Activated T-helper 1 cell treated with anti-CD3 and anti-CD28 coated beads, Interleukin-12 subunit alpha, Interleukin-12 subunit beta, Interleukin-2, Interleukin-4 antibody, amounts not matched to agents 30 ng/mL and 10 ng/mL and 1 ng/mL, durations not matched to agents 14 hours and 24 hours and 36 hours (primary cell): ENCODE measurements at regions of chr2 and their contacts with region 1.

Region 1: GRCh38 chr2:17646081-17646554 is 105.6 kb downstream of the VSNL1 start:
- DNase-seq: peak; percentile 29
- H3K4me3 Mint-ChIP-seq: no peak overlapping the region
- H3K27ac Mint-ChIP-seq: no peak overlapping the region
- H3K4me1 Mint-ChIP-seq: no peaks in the 10 kb centered on the region
- H3K27me3 Mint-ChIP-seq: no peaks in the 10 kb centered on the region

Region 2: DNA sequence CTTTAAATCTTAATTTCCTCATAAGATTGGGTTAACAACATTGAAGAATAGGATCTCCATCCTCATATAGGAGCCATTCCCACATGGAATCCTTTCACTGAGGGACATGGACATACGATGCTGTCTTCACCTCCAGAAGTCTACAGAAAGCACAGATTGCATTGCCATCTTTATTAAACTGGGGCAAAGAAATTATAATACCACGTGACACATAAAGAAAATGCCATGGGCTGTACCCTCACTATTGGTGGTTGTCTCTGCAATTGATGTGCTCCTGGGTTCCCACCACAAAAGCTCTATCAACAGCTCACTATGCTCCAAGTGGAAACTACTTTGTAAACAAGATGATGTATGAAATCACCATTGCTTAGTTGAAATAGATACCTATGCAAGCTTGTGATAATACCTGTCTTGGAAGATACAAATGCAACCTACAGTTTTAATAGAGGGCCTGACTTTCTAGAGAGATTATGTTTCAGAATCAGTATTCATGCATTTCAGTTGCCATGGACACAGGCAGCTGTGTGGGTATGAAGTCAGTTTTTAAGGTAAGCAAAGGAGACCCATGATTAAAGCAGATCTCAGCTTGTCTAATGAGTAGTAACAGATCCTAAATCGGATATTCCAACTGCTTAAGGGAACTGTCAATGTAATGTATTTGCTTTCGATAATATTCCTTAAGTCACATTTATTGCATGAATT is 464.9 kb before region 1 on chr2:
- intact Hi-C with region 1: no loop called
- DNase-seq: no peak
- H3K4me3 Mint-ChIP-seq: no peak overlapping the region
- H3K27ac Mint-ChIP-seq: no peak overlapping the region
- H3K4me1 Mint-ChIP-seq: no peaks in the 10 kb centered on the region
- H3K27me3 Mint-ChIP-seq: no peaks in the 10 kb centered on the region

Region 3: GRCh38 chr2:17658251-17658843 is 12.2 kb after region 1 on chr2:
- intact Hi-C with region 1: loop called (anchors 1 kb)
- DNase-seq: no peak
- H3K4me3 Mint-ChIP-seq: no peak overlapping the region
- H3K27ac Mint-ChIP-seq: peak overlapping the region; percentile 20
- H3K4me1 Mint-ChIP-seq: peaks cover 18% of the 10 kb centered on the region
- H3K27me3 Mint-ChIP-seq: no peaks in the 10 kb centered on the region

Region 4: DNA sequence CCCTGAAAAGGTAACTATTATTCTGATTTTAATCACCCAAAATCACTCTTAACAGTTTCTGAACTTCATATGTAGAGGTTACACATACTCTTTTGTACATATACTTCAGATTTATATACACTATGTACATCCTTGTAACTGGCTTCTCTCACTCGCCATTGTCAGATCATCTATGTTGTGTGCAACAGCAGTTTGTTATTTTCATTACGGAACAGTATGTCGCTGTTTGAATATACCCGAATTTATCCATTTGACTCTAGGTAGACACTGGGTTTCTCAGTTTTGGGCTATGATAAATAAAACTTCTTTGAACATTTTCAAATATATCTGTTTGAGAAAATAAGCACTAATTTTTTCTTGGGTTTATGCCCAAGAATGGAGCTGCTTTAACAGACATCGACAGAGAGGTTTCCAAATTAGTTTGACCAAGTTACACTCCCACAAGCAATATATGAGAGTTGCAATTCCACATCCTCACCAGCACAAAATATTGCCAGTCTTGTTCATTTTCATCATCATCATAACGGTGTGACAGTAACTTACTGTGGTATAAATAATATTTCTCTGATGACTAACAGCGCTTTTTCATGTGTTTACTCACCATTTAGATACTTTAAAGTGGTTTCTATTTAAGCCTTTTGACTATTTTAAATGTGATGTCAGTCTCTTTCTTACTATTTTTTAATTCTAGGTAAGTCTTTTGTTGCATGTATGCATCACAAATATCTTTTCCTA is 26.6 kb after region 1 on chr2:
- intact Hi-C with region 1: loop called (anchors 1 kb)
- DNase-seq: no peak
- H3K4me3 Mint-ChIP-seq: no peak overlapping the region
- H3K27ac Mint-ChIP-seq: no peak overlapping the region
- H3K4me1 Mint-ChIP-seq: no peaks in the 10 kb centered on the region
- H3K27me3 Mint-ChIP-seq: no peaks in the 10 kb centered on the region

Region 5: GRCh38 chr2:17830053-17831034 is 184.2 kb after region 1 on chr2:
- intact Hi-C with region 1: loop called (anchors 2 kb)
- DNase-seq: peak; percentile 16
- H3K4me3 Mint-ChIP-seq: peak overlapping the region; percentile 2
- H3K27ac Mint-ChIP-seq: no peak overlapping the region
- H3K4me1 Mint-ChIP-seq: peaks cover 6% of the 10 kb centered on the region
- H3K27me3 Mint-ChIP-seq: peaks cover 46% of the 10 kb centered on the region

Region 6: DNA sequence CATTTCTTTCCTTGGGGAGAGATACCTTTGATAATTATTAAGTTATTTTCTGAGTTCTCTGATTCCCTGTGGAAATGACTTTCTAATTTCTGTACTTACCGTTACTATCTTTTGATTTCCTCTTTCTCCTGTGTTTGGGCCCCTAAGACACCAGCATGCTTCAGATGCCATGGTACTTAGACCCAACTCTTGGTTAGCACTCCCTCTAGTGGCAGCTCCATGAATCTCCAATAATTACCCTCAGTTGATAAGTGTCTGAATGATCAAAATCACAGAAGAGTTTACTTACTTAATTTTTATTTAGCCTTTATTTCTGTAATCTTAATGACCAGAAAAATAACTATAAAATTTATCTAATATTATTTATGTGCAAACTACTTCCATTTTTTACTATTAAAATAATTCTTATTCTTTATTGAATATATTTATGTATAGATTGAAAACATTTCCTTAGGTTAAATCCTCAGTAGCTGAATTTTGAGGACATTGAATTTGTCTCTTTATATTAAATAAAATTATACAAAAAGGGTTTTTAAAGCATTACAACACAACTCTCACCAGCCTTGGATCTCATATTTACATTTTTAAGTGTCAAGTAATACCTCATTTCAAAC is 532.7 kb after region 1 on chr2:
- intact Hi-C with region 1: loop called (anchors 10 kb)
- DNase-seq: no peak
- H3K4me3 Mint-ChIP-seq: no peak overlapping the region
- H3K27ac Mint-ChIP-seq: no peak overlapping the region
- H3K4me1 Mint-ChIP-seq: no peaks in the 10 kb centered on the region
- H3K27me3 Mint-ChIP-seq: no peaks in the 10 kb centered on the region

Region 7: DNA sequence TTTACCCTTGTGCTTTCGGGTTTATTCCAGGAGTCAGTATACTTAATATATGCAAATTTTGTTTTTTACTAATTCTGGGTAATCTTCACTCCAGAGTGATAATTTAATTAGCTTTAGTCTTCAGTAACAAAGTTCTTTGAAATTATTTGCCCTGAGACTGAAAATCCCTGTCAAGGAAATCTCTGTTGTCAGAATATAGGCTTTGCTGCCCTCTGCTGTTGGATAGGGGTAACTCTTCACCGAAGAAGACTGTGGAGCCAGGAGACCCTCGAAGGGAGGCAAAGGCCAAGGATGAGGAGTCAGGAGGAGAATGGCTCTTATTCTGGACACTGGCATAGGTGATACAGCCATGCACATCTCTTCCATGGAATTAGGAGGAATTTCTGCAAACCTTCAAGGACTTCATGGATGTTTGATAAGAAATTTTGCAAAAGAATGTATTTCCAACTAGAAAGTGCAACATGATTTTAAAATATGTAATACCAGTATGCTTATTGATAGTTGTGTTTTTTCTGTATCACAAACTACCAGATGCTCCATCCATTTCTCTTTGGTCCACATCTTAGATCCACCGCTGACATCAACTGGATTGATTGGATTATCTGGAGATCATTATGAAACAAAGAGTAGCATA is 732.0 kb after region 1 on chr2:
- intact Hi-C with region 1: loop called (anchors 2 kb)
- DNase-seq: no peak
- H3K4me3 Mint-ChIP-seq: no peak overlapping the region
- H3K27ac Mint-ChIP-seq: no peak overlapping the region
- H3K4me1 Mint-ChIP-seq: no peaks in the 10 kb centered on the region
- H3K27me3 Mint-ChIP-seq: peaks cover 9% of the 10 kb centered on the region